ENCODE measurements at regions of chr2 and their contacts with region 1.

Region 1: GRCh38 chr2:230877732-230878598 is 13.2 kb downstream of the ITM2C start:
- DNase-seq: no peak
- H3K4me3 ChIP-seq: no peak overlapping the region
- CTCF ChIP-seq: no peak

Region 2: DNA sequence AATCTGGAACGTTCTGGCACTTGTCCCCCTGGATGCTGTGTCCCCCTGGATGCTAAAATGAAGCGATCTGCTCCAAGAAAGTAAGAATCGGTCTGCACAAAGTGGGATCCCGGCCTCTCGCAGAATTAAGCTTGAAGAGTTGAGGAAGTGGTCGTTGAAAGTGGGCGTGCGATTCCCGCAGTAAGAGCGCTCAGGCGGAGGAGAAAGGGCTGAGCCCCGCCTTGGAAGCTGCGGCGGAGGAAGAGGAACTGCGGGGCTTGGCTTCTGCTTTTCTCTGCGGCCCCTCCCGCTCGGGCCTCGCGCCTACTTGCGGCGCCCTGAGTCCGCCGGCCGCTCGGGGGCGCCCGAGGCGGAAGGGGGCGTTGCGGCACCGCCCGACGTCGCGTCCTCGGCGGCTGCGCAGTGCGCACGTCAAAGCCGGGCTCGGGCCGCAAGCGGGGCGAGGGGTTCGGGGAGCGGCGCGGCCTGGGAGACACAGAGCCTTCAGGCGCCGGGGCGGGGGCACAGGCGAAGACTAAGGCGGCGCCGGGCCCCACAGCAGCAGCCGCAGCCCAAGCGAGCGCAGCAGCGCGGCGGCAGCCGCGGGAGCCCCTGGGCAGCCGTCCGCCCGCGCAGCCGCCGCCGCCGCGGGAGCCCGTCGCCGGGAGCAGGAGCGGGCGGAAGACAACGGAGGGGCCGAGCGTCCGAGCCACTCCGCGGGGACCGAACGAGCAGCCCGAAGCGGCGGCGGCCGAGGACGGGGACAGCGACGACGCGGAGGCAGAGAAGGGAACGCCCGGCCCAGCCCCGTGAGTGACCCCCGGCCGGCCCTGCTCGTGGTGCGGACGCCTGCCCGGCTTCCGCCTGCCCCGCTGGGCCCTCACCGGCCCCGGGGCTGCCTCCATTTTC is 165.3 kb before region 1 on chr2 and contains the start of gene CAB39:
- in situ Hi-C with region 1: no loop called
- DNase-seq: peak; percentile 62
- H3K4me3 ChIP-seq: peak within 1 kb of the TSS; percentile 89
- CTCF ChIP-seq: peak; percentile 68

Region 3: GRCh38 chr2:230914886-230915285 is 36.9 kb after region 1 on chr2:
- in situ Hi-C with region 1: loop called (anchors 5 kb)
- DNase-seq: no peak
- H3K4me3 ChIP-seq: no peak overlapping the region
- CTCF ChIP-seq: no peak